ENCODE measurements at regions of chr19 and their contacts with region 1.

Region 1: GRCh38 chr19:57362997-57363705 is at the starts of genes TRAPPC2B and ZNF547:
- DNase-seq: peak; percentile 100
- ATAC-seq: peak; percentile 94
- H3K4me3 ChIP-seq: peak within 1 kb of the TSS; percentile 56 to 80 (median 71)
- H3K4me3 Mint-ChIP-seq: peak within 1 kb of the TSS; percentile 95
- H3K27ac ChIP-seq: peak within 1 kb of the TSS; percentile 85 to 97
- H3K27ac Mint-ChIP-seq: peak within 1 kb of the TSS; percentile 97
- H3K4me1 ChIP-seq: peaks cover 10 to 15% of the 10 kb centered on the region in 2 donors
- H3K4me1 Mint-ChIP-seq: peaks cover 17% of the 10 kb centered on the region
- H3K27me3 ChIP-seq: no peaks in the 10 kb centered on the region
- H3K27me3 Mint-ChIP-seq: no peaks in the 10 kb centered on the region
- CTCF ChIP-seq: no peak
- total RNA-seq, gene TRAPPC2B: 9.6 and 12.4 TPM in 2 replicates
- total RNA-seq, gene ZNF547: 9.7 and 9.9 TPM in 2 replicates

Region 2: GRCh38 chr19:57267291-57267690 is 95.9 kb before region 1 on chr19:
- CTCF ChIA-PET with region 1: no interaction called
- POLR2A ChIA-PET with region 1: no interaction called
- intact Hi-C with region 1: no loop called
- DNase-seq: no peak
- ATAC-seq: no peak
- H3K4me3 ChIP-seq: no peak overlapping the region
- H3K4me3 Mint-ChIP-seq: no peak overlapping the region
- H3K27ac ChIP-seq: no peak overlapping the region
- H3K27ac Mint-ChIP-seq: no peak overlapping the region
- H3K4me1 ChIP-seq: peaks cover 0 to 20% of the 10 kb centered on the region in 2 donors
- H3K4me1 Mint-ChIP-seq: peaks cover 24% of the 10 kb centered on the region
- H3K27me3 ChIP-seq: no peaks in the 10 kb centered on the region
- H3K27me3 Mint-ChIP-seq: no peaks in the 10 kb centered on the region
- CTCF ChIP-seq: no peak

Region 3: GRCh38 chr19:57279418-57280066 is 83.6 kb before region 1 on chr19:
- CTCF ChIA-PET with region 1: no interaction called
- POLR2A ChIA-PET with region 1: no interaction called
- intact Hi-C with region 1: loop called (anchors 1 kb)
- DNase-seq: peak; percentile 92
- ATAC-seq: peak; percentile 73
- H3K4me3 ChIP-seq: peak overlapping the region; percentile 73 to 94 (median 91)
- H3K4me3 Mint-ChIP-seq: no peak overlapping the region
- H3K27ac ChIP-seq: peak overlapping the region; percentile 98 to 100
- H3K27ac Mint-ChIP-seq: no peak overlapping the region
- H3K4me1 ChIP-seq: peaks cover 29 to 33% of the 10 kb centered on the region in 2 donors
- H3K4me1 Mint-ChIP-seq: peaks cover 31% of the 10 kb centered on the region
- H3K27me3 ChIP-seq: no peaks in the 10 kb centered on the region
- H3K27me3 Mint-ChIP-seq: no peaks in the 10 kb centered on the region
- CTCF ChIP-seq: peak; percentile 26

Region 4: GRCh38 chr19:57334191-57334590 is 29.0 kb before region 1 on chr19:
- CTCF ChIA-PET with region 1: no interaction called
- POLR2A ChIA-PET with region 1: no interaction called
- intact Hi-C with region 1: no loop called
- DNase-seq: no peak
- ATAC-seq: no peak
- H3K4me3 ChIP-seq: no peak overlapping the region
- H3K4me3 Mint-ChIP-seq: no peak overlapping the region
- H3K27ac ChIP-seq: no peak overlapping the region
- H3K27ac Mint-ChIP-seq: no peak overlapping the region
- H3K4me1 ChIP-seq: no peaks in the 10 kb centered on the region
- H3K4me1 Mint-ChIP-seq: no peaks in the 10 kb centered on the region
- H3K27me3 ChIP-seq: no peaks in the 10 kb centered on the region
- H3K27me3 Mint-ChIP-seq: no peaks in the 10 kb centered on the region
- CTCF ChIP-seq: no peak

Region 5: DNA sequence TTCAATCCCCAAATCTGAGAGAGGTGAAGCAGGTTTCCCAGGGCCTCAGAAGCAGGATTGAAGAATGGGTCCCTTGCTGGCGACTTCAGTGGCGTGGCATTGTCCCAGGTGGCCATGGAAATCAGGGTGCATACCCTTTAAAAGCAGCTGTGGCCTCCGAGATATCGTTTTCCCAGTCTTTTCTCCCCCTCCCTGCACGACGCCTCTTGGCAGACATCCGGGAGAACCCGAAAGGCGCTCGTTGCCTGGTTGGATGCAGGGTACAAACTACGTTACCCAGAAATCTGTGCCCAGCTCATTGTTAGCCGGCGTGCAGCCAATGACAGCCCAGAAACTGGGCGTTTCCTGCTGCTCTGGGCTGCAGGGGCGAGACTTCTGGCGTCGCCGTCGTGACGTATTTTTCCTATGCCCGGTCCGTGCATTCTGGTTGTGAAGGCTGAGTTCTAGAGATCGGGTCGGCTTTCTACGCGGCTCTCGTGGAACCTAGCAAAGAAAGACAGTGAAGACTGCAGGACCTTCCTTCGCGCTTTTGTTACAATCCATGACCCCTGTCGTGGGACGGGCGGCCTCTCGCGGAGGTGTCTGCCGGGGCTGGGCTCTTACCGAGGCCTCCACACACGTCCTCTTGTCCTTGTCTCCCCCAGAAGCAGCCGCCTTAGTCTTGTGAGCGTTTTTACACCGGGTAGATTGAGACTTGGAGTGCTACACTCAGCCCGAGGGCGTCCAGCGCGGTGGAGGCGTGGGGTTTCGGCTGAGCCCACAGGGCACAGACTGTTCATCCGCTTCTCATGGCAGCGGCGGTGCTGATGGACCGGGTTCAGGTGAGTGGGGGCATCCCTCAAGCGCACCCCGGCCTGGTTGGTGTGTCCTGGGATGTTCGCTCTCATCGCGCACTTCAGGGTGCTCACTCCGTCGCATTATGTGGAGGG is 12.0 kb before region 1 on chr19 and contains the start of gene ZNF304:
- CTCF ChIA-PET with region 1: no interaction called
- POLR2A ChIA-PET with region 1: interaction called, 5 read pairs
- intact Hi-C with region 1: loop called (anchors 1 kb)
- DNase-seq: peak; percentile 90
- ATAC-seq: peak; percentile 100
- H3K4me3 ChIP-seq: peak within 1 kb of the TSS; percentile 66 to 97 (median 87)
- H3K4me3 Mint-ChIP-seq: peak within 1 kb of the TSS; percentile 97
- H3K27ac ChIP-seq: peak within 1 kb of the TSS; percentile 50 to 86
- H3K27ac Mint-ChIP-seq: peak within 1 kb of the TSS; percentile 90
- H3K4me1 ChIP-seq: peaks cover 15 to 19% of the 10 kb centered on the region in 2 donors
- H3K4me1 Mint-ChIP-seq: peaks cover 31% of the 10 kb centered on the region
- H3K27me3 ChIP-seq: no peaks in the 10 kb centered on the region
- H3K27me3 Mint-ChIP-seq: peaks cover 4% of the 10 kb centered on the region
- CTCF ChIP-seq: no peak
- total RNA-seq, gene ZNF304: 16.2 and 16.9 TPM in 2 replicates

Region 6: DNA sequence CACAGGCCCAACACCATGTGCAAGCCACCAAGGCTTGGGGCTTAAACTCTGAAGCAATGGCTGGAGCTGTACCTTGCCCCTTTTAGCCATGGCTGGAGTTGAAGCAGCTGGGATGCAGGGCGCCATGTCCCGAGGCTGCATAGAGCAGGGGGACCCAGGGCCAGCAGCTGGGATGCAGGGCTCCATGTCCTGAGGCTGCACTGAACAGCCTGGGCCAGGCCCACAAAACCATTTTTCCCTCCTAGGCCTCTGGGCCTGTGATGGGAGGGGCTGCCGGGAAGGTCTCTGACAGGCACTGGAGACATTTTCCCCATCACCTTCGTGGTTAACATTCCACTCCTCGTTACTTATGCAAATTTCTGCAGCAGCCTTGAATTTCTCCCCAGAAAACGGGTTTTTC is 11.0 kb after region 1 on chr19:
- CTCF ChIA-PET with region 1: no interaction called
- POLR2A ChIA-PET with region 1: no interaction called
- intact Hi-C with region 1: no loop called
- DNase-seq: no peak
- ATAC-seq: no peak
- H3K4me3 ChIP-seq: no peak overlapping the region
- H3K4me3 Mint-ChIP-seq: no peak overlapping the region
- H3K27ac ChIP-seq: no peak overlapping the region
- H3K27ac Mint-ChIP-seq: no peak overlapping the region
- H3K4me1 ChIP-seq: no peaks in the 10 kb centered on the region
- H3K4me1 Mint-ChIP-seq: no peaks in the 10 kb centered on the region
- H3K27me3 ChIP-seq: no peaks in the 10 kb centered on the region
- H3K27me3 Mint-ChIP-seq: no peaks in the 10 kb centered on the region
- CTCF ChIP-seq: no peak

Region 7: GRCh38 chr19:57477191-57478008 is 114.2 kb after region 1 on chr19 and contains the start of gene ZNF772:
- CTCF ChIA-PET with region 1: no interaction called
- POLR2A ChIA-PET with region 1: no interaction called
- intact Hi-C with region 1: loop called (anchors 1 kb)
- DNase-seq: peak; percentile 95
- ATAC-seq: peak; percentile 99
- H3K4me3 ChIP-seq: peak within 1 kb of the TSS; percentile 77 to 91 (median 85)
- H3K4me3 Mint-ChIP-seq: peak within 1 kb of the TSS; percentile 86
- H3K27ac ChIP-seq: peak within 1 kb of the TSS; percentile 65 to 81
- H3K27ac Mint-ChIP-seq: peak within 1 kb of the TSS; percentile 81
- H3K4me1 ChIP-seq: peaks cover 11 to 15% of the 10 kb centered on the region in 2 donors
- H3K4me1 Mint-ChIP-seq: peaks cover 27% of the 10 kb centered on the region
- H3K27me3 ChIP-seq: no peaks in the 10 kb centered on the region
- H3K27me3 Mint-ChIP-seq: peaks cover 10% of the 10 kb centered on the region
- CTCF ChIP-seq: peak; percentile 68
- total RNA-seq, gene ZNF772: 26.2 and 27.4 TPM in 2 replicates

Region 8: GRCh38 chr19:57914531-57914930 is 551.4 kb after region 1 on chr19:
- CTCF ChIA-PET with region 1: no interaction called
- POLR2A ChIA-PET with region 1: no interaction called
- intact Hi-C with region 1: loop called (anchors 1 kb)
- DNase-seq: no peak
- ATAC-seq: no peak
- H3K4me3 ChIP-seq: no peak overlapping the region
- H3K4me3 Mint-ChIP-seq: peak overlapping the region; percentile 96
- H3K27ac ChIP-seq: no peak overlapping the region
- H3K27ac Mint-ChIP-seq: peak overlapping the region; percentile 26
- H3K4me1 ChIP-seq: peaks cover 9 to 13% of the 10 kb centered on the region in 2 donors
- H3K4me1 Mint-ChIP-seq: peaks cover 40% of the 10 kb centered on the region
- H3K27me3 ChIP-seq: no peaks in the 10 kb centered on the region
- H3K27me3 Mint-ChIP-seq: no peaks in the 10 kb centered on the region
- CTCF ChIP-seq: no peak

Measured in B cell (primary cell).